Right ventricle myocardium inferior (tissue), 1 donor: ENCODE measurements at regions of chr2 and their contacts with region 1.

Region 1: DNA sequence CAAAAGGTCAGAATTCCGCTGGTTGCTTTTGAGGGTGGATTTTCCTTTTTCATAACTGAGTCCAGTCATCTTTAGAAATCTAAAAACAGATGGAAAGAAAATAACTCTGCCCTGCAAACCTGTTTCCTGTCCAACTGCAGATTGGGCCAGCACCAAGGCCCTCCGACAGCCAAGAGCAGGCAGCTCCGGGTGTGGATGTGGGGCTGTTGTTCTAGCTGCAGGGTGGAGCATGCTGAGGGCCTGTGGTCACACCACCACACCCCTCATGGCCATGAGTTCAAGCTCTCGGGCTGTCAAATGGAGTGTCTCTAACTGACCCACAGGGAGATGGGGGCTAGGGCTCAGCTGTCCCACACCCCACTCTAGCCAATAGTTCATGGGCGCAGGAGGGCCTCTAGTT is 69.3 kb upstream of the BZW1 start:
- DNase-seq: peak; percentile 85
- ATAC-seq: peak; percentile 90

Region 2: DNA sequence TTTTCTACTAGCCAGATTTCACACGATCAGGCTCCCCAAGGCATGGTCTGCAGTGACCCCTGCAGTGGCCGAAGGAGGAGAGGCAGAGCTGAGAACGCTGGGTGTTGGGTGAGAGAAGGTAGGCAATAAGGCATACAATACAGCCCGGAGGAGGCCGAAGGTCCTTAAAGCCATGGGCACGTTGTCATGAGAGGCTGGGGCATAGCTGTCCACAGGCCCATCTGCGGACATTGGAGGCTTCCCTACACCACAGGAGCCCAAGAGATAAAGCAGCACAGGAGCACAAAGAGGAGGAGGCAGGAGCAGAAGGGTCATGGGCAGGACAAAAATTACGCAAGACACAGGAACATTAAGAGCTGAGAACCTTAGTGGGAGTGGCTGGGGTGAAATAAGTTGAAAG is 52.6 kb after region 1 on chr2:
- intact Hi-C with region 1: loop called (anchors 5 kb)
- DNase-seq: no peak
- ATAC-seq: peak; percentile 81